ENCODE measurements at regions of chr2 and their contacts with region 1.

Region 1: GRCh38 chr2:108988796-108989713 is at the start of gene EDAR:
- DNase-seq: peak; percentile 81
- H3K4me3 Mint-ChIP-seq: peak within 1 kb of the TSS; percentile 78
- H3K27ac Mint-ChIP-seq: peak within 1 kb of the TSS; percentile 47
- H3K4me1 Mint-ChIP-seq: peaks cover 56% of the 10 kb centered on the region
- H3K27me3 Mint-ChIP-seq: no peaks in the 10 kb centered on the region
- total RNA-seq, gene EDAR: 1.1 to 1.3 TPM

Region 2: GRCh38 chr2:108533832-108534583 is 455.0 kb before region 1 on chr2 and contains the start of gene LIMS1:
- CTCF ChIA-PET with region 1: no interaction called
- intact Hi-C with region 1: loop called (anchors 10 kb)
- DNase-seq: peak; percentile 89
- H3K4me3 Mint-ChIP-seq: peak within 1 kb of the TSS; percentile 96
- H3K27ac Mint-ChIP-seq: peak within 1 kb of the TSS; percentile 82
- H3K4me1 Mint-ChIP-seq: peaks cover 31% of the 10 kb centered on the region
- H3K27me3 Mint-ChIP-seq: no peaks in the 10 kb centered on the region
- total RNA-seq, gene LIMS1: 43.8 to 47.1 TPM

Region 3: GRCh38 chr2:108719149-108720044 is 269.7 kb before region 1 on chr2 and contains the start of gene RANBP2:
- CTCF ChIA-PET with region 1: no interaction called
- intact Hi-C with region 1: loop called (anchors 5 kb)
- DNase-seq: peak; percentile 95
- H3K4me3 Mint-ChIP-seq: peak within 1 kb of the TSS; percentile 95
- H3K27ac Mint-ChIP-seq: peak within 1 kb of the TSS; percentile 97
- H3K4me1 Mint-ChIP-seq: peaks cover 25% of the 10 kb centered on the region
- H3K27me3 Mint-ChIP-seq: no peaks in the 10 kb centered on the region
- total RNA-seq, gene RANBP2: 47.4 to 48.3 TPM

Region 4: GRCh38 chr2:108927936-108928659 is 61.0 kb before region 1 on chr2:
- CTCF ChIA-PET with region 1: interaction called, 153 read pairs
- intact Hi-C with region 1: loop called (anchors 1 kb)
- DNase-seq: peak; percentile 66
- H3K4me3 Mint-ChIP-seq: no peak overlapping the region
- H3K27ac Mint-ChIP-seq: no peak overlapping the region
- H3K4me1 Mint-ChIP-seq: no peaks in the 10 kb centered on the region
- H3K27me3 Mint-ChIP-seq: no peaks in the 10 kb centered on the region

Region 5: DNA sequence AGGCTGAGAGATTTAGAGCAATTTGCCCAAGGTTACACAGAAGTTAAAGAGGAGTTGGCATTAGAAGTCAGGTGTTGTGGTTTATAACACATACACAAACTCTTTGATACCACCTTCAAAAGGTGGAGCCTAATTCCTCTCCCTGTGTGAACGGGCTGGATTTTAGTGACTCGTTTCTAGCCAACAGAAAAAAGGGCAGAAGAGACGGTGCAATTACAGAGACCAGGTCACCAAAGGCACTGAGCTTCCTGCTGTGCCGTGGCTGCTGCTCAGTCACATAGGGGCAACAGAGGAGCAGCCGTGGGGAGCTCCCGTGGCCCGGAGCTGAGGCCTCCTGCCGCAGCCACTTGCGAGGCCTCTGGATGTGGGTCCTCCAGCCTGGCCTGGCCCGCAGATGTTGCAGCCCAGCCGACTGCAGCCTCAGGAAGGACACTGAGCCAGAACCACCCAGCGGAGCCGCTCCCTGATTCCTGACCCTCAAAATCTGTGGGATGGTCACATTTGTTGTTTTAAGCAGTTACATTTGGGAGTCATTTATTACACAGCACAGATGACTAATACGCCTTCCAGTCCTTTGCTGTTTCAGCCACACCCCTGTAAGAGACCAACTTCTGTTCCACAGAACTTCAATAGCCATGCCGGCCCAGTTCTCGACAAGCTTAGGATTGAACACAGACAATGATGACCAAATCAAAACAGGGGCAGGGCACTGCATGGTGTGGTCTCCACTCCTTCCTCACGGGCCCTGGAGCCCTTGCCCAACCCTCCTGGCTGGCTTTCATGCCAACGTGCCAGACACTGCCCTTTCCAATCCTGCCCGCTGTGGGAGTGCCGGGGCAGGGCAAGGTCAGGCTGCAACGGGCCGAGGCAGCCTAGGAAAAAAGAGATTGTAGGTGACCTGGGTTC is 17.1 kb before region 1 on chr2:
- CTCF ChIA-PET with region 1: interaction called, 13 read pairs
- intact Hi-C with region 1: loop called (anchors 2 kb)
- DNase-seq: no peak
- H3K4me3 Mint-ChIP-seq: no peak overlapping the region
- H3K27ac Mint-ChIP-seq: no peak overlapping the region
- H3K4me1 Mint-ChIP-seq: peaks cover 85% of the 10 kb centered on the region
- H3K27me3 Mint-ChIP-seq: no peaks in the 10 kb centered on the region

Region 6: DNA sequence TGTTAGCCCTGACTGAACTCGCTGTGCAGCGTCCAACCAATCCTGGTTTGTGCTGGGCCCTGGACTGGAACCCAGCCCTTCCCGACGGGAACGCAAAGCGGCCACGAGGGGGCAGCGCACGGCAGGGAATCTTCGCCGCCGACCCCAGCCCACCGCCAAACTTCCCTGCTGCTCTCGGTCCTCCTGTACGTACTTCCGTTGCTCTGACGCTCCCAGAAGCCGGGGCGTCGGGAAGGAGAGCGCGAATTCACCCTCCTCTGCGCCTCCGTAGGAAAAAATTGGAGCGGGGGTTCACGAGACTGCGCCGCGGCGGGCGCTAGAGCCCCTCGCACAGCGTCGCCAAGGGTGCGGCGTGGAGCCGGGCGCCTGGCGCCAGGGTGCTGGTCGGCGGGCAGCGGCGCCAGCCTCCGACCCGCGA is 139.0 kb after region 1 on chr2:
- CTCF ChIA-PET with region 1: no interaction called
- intact Hi-C with region 1: loop called (anchors 1 kb)
- DNase-seq: peak; percentile 81
- H3K4me3 Mint-ChIP-seq: peak overlapping the region; percentile 76
- H3K27ac Mint-ChIP-seq: no peak overlapping the region
- H3K4me1 Mint-ChIP-seq: peaks cover 42% of the 10 kb centered on the region
- H3K27me3 Mint-ChIP-seq: peaks cover 6% of the 10 kb centered on the region

Region 7: DNA sequence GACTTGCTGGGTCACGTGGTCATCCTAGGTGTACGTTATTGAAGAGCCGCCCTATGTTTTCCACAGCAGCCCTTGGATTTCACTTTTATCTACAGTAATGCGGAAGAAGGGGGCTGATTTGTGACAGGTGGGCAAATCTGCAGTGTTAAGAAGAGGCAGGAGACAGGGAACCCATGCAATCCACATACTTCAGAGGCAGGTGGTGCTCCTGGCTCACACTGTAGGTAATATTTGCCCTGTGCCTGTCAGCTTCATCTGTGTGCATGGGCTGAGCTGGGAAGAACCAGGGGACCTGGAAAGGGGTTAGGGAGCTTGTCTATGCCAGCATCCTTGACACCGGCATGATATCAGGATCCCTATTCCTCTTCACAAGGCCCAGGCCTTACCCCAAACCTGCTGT is 323.8 kb after region 1 on chr2:
- CTCF ChIA-PET with region 1: no interaction called
- intact Hi-C with region 1: no loop called
- DNase-seq: no peak
- H3K4me3 Mint-ChIP-seq: no peak overlapping the region
- H3K27ac Mint-ChIP-seq: no peak overlapping the region
- H3K4me1 Mint-ChIP-seq: peaks cover 3% of the 10 kb centered on the region
- H3K27me3 Mint-ChIP-seq: no peaks in the 10 kb centered on the region

Region 8: GRCh38 chr2:109457794-109458193 is 468.7 kb after region 1 on chr2:
- CTCF ChIA-PET with region 1: no interaction called
- intact Hi-C with region 1: no loop called
- DNase-seq: no peak
- H3K4me3 Mint-ChIP-seq: no peak overlapping the region
- H3K27ac Mint-ChIP-seq: no peak overlapping the region
- H3K4me1 Mint-ChIP-seq: peaks cover 19% of the 10 kb centered on the region
- H3K27me3 Mint-ChIP-seq: no peaks in the 10 kb centered on the region

Measured in activated naive CD4-positive, alpha-beta T cell treated with anti-CD3 and anti-CD28 coated beads for 36 hours (primary cell).